Activated B cell treated with CpG ODN at 0.5 μM for 24 hours (primary cell): ENCODE measurements at regions of chr14 and their contacts with region 1.

Region 1: GRCh38 chr14:33781265-33781664 is 169.6 kb downstream of the EGLN3 start:
- DNase-seq: no peak
- ATAC-seq: no peak
- H3K4me3 Mint-ChIP-seq: no peak overlapping the region
- H3K27ac Mint-ChIP-seq: no peak overlapping the region
- H3K4me1 Mint-ChIP-seq: no peaks in the 10 kb centered on the region
- H3K27me3 Mint-ChIP-seq: peaks cover 2% of the 10 kb centered on the region
- CTCF ChIP-seq: no peak

Region 2: DNA sequence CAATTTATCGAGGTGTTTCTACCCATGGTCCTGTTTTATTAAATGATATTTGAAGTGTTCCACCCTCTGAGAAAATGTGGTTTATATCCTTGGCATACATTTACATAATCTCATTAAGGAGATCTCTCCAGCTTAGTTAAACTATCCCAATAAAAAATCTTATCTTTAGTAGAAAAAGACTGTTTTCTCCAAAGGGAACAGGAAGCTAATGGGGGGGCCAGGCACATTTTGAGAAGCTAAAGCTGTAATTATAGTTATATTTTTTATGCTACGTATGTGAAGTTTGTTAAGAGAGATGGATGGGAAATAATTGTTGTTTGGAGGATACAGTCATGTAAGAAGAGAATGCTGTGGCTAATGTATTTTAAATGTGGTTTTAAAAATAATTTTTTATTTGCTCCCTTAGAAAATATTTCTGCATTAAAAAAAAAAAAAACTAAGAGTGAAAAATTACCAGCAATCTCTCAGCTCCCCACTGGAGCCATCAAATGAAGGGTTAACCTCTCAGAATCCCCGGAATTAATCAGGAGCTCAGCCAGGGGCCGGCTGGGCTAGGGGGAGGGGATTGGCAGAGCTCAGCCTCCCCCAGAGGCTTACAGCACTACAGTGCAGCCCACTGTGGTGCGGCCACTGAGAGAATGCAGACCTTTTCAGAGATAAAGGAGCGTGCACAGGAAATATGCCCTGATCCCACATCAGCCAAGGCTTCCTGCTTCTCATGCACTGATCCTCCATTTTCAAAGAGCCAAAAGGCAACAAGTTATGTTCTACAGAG is 16.2 kb before region 1 on chr14:
- CTCF ChIA-PET with region 1: no interaction called
- POLR2A ChIA-PET with region 1: no interaction called
- intact Hi-C with region 1: no loop called
- DNase-seq: no peak
- ATAC-seq: no peak
- H3K4me3 Mint-ChIP-seq: no peak overlapping the region
- H3K27ac Mint-ChIP-seq: no peak overlapping the region
- H3K4me1 Mint-ChIP-seq: no peaks in the 10 kb centered on the region
- H3K27me3 Mint-ChIP-seq: no peaks in the 10 kb centered on the region
- CTCF ChIP-seq: no peak

Region 3: GRCh38 chr14:33792720-33793368 is 11.6 kb after region 1 on chr14:
- CTCF ChIA-PET with region 1: interaction called, 15 read pairs
- POLR2A ChIA-PET with region 1: no interaction called
- intact Hi-C with region 1: no loop called
- DNase-seq: peak; percentile 30
- ATAC-seq: no peak
- H3K4me3 Mint-ChIP-seq: no peak overlapping the region
- H3K27ac Mint-ChIP-seq: no peak overlapping the region
- H3K4me1 Mint-ChIP-seq: peaks cover 6% of the 10 kb centered on the region
- H3K27me3 Mint-ChIP-seq: peaks cover 27% of the 10 kb centered on the region
- CTCF ChIP-seq: peak; percentile 49